ENCODE measurements at regions of chr1 and their contacts with region 1.

Region 1: GRCh38 chr1:27772933-27773825 is at the start of gene STX12:
- DNase-seq: peak; percentile 100
- H3K4me3 ChIP-seq: peak within 1 kb of the TSS; percentile 79 to 95 (median 91)
- H3K27ac ChIP-seq: peak within 1 kb of the TSS; percentile 90 to 94 (median 93)
- H3K4me1 ChIP-seq: peaks cover 0 to 31% (median 23%) of the 10 kb centered on the region in 4 donors
- H3K27me3 ChIP-seq: no peaks in the 10 kb centered on the region
- CTCF ChIP-seq: no peak
- EP300 ChIP-seq: peak in 1 of 4 donors; percentile 3
- POLR2A ChIP-seq: peak; percentile 87 to 89
- total RNA-seq, gene STX12: 54.0 to 63.8 (median 58.8) TPM

Region 2: GRCh38 chr1:27589841-27590426 is 183.2 kb before region 1 on chr1:
- intact Hi-C with region 1: no loop called
- DNase-seq: peak; percentile 85
- H3K4me3 ChIP-seq: no peak overlapping the region
- H3K27ac ChIP-seq: peak overlapping the region; percentile 78 to 100 (median 96)
- H3K4me1 ChIP-seq: peaks cover 0 to 92% (median 76%) of the 10 kb centered on the region in 4 donors
- H3K27me3 ChIP-seq: no peaks in the 10 kb centered on the region
- CTCF ChIP-seq: no peak
- EP300 ChIP-seq: no peak
- POLR2A ChIP-seq: no peak

Region 3: DNA sequence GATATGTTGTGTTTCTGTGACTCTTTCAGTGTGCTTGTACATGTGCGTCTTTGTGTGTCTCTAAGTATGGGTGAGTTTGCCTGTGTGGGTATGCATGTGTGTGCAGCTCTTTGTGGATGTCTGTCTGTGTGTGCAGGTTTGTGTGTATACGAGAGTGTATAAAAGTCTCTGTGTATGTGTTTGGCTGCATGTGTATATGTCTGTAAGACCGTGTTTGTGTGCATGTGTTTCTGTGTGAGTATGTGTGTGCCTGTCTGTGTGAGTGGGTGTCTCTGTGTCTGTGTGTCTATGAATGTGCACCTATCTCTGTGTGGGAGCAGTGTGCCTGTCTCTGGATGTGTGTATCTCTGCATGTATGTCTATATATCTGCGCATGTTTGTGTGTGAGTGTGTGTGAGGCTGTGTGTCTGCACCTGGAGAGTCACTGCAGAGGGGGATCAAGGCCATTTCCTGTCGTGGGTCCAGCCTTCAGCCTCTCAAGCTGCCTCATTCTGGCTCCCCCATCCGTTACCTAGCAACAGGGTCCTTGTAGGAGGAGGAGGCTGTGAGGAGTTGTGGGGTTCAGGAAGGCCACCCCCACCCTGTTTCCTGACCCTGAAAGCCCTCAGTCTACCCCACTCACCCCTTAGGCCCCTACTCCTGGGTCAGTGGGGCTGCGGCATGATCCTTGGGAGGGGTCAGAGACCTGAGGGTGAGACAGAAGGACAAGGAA is 148.6 kb before region 1 on chr1:
- intact Hi-C with region 1: no loop called
- DNase-seq: no peak
- H3K4me3 ChIP-seq: no peak overlapping the region
- H3K27ac ChIP-seq: peak overlapping the region in 1 of 4 donors; percentile 7
- H3K4me1 ChIP-seq: peaks cover 0 to 7% (median 0%) of the 10 kb centered on the region in 4 donors
- H3K27me3 ChIP-seq: no peaks in the 10 kb centered on the region
- CTCF ChIP-seq: no peak
- EP300 ChIP-seq: no peak
- POLR2A ChIP-seq: no peak

Region 4: GRCh38 chr1:27671964-27672749 is 101.0 kb before region 1 on chr1 and contains the start of gene IFI6:
- intact Hi-C with region 1: loop called (anchors 5 kb)
- DNase-seq: peak; percentile 94
- H3K4me3 ChIP-seq: peak within 1 kb of the TSS; percentile 37 to 55 (median 54)
- H3K27ac ChIP-seq: peak within 1 kb of the TSS; percentile 87 to 93 (median 91)
- H3K4me1 ChIP-seq: peaks cover 0 to 38% (median 28%) of the 10 kb centered on the region in 4 donors
- H3K27me3 ChIP-seq: no peaks in the 10 kb centered on the region
- CTCF ChIP-seq: peak in 3 of 4 experiments; percentile 43 to 61 (median 55)
- EP300 ChIP-seq: no peak
- POLR2A ChIP-seq: peak; percentile 38 to 57
- total RNA-seq, gene IFI6: 33.6 to 118 (median 82.0) TPM

Region 5: GRCh38 chr1:27725374-27726173 is 47.6 kb before region 1 on chr1 and contains the start of gene FAM76A:
- intact Hi-C with region 1: loop called (anchors 2 kb)
- DNase-seq: peak; percentile 100
- H3K4me3 ChIP-seq: peak within 1 kb of the TSS; percentile 76 to 100 (median 87)
- H3K27ac ChIP-seq: peak within 1 kb of the TSS; percentile 93 to 99 (median 97)
- H3K4me1 ChIP-seq: peaks cover 0 to 19% (median 17%) of the 10 kb centered on the region in 4 donors
- H3K27me3 ChIP-seq: no peaks in the 10 kb centered on the region
- CTCF ChIP-seq: peak in 1 of 4 experiments; percentile 20
- EP300 ChIP-seq: no peak
- POLR2A ChIP-seq: peak in 1 of 2 donors; percentile 53
- total RNA-seq, gene FAM76A: 11.9 to 24.3 (median 19.1) TPM

Measured in sigmoid colon (tissue), 7 donors.